CD4-positive, alpha-beta memory T cell (primary cell): ENCODE measurements at regions of chr18 and their contacts with region 1.

Region 1: DNA sequence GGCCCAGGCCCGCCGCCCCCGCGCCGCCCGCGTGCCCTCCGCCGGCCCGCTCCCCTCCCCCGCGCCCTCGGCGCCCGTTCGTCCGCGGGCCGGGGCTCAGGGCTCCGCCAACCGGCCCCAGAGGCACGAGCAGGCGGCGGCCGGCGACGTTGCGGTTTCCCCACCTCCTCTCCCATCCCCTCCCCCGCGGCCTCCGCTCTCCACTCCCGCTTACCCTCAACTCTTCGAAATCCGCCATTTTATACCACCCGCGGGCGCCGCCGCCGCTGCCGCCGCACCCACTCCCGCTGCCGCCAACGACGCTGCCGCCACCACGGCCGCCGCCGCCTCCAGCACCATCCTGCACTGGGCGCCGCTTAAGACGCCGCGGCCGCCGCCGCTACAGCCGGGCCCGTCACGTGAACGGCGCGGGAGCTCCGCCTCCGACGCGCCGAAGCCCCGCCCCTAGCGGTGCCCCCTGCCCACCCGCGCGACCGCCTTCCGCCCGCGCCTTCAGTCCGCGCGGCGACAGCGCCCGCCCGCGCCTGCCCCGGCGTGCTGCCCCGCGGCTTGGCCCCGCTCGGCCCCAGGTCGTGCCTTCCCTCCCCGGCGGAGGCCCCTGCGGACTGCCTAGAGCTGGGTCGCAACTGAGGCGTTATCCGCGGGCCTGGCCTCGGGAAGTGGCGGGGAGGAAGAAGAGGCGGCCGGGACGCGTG is at the starts of genes KATNAL2 and PIAS2:
- DNase-seq: peak; percentile 72 to 79 (median 73)
- H3K4me3 ChIP-seq: peak within 1 kb of the TSS; percentile 60 to 66
- H3K4me3 Mint-ChIP-seq: peak within 1 kb of the TSS; percentile 91 to 96 (median 92)
- H3K27ac ChIP-seq: peak within 1 kb of the TSS; percentile 40
- H3K27ac Mint-ChIP-seq: peak within 1 kb of the TSS; percentile 89 to 95 (median 91)
- H3K4me1 ChIP-seq: peaks cover 27% of the 10 kb centered on the region
- H3K4me1 Mint-ChIP-seq: peaks cover 35 to 56% (median 47%) of the 10 kb centered on the region in 4 donors
- H3K27me3 ChIP-seq: no peaks in the 10 kb centered on the region
- H3K27me3 Mint-ChIP-seq: no peaks in the 10 kb centered on the region
- total RNA-seq, gene KATNAL2: 0.94 to 2.1 TPM
- total RNA-seq, gene PIAS2: 36.2 to 38.3 TPM

Region 2: GRCh38 chr18:46829947-46830346 is 87.3 kb before region 1 on chr18:
- CTCF ChIA-PET with region 1: no interaction called
- POLR2A ChIA-PET with region 1: no interaction called
- intact Hi-C with region 1: loop called (anchors 5 kb)
- DNase-seq: no peak
- H3K4me3 ChIP-seq: no peak overlapping the region
- H3K4me3 Mint-ChIP-seq: no peak overlapping the region
- H3K27ac ChIP-seq: no peak overlapping the region
- H3K27ac Mint-ChIP-seq: no peak overlapping the region
- H3K4me1 ChIP-seq: no peaks in the 10 kb centered on the region
- H3K4me1 Mint-ChIP-seq: peaks cover 0 to under 1% (median 0%) of the 10 kb centered on the region in 4 donors
- H3K27me3 ChIP-seq: no peaks in the 10 kb centered on the region
- H3K27me3 Mint-ChIP-seq: no peaks in the 10 kb centered on the region

Region 3: GRCh38 chr18:46903406-46903805 is 13.8 kb before region 1 on chr18:
- CTCF ChIA-PET with region 1: no interaction called
- POLR2A ChIA-PET with region 1: no interaction called
- intact Hi-C with region 1: no loop called
- DNase-seq: no peak
- H3K4me3 ChIP-seq: no peak overlapping the region
- H3K4me3 Mint-ChIP-seq: no peak overlapping the region
- H3K27ac ChIP-seq: no peak overlapping the region
- H3K27ac Mint-ChIP-seq: no peak overlapping the region
- H3K4me1 ChIP-seq: no peaks in the 10 kb centered on the region
- H3K4me1 Mint-ChIP-seq: peaks cover 14 to 27% (median 19%) of the 10 kb centered on the region in 4 donors
- H3K27me3 ChIP-seq: no peaks in the 10 kb centered on the region
- H3K27me3 Mint-ChIP-seq: no peaks in the 10 kb centered on the region

Region 4: DNA sequence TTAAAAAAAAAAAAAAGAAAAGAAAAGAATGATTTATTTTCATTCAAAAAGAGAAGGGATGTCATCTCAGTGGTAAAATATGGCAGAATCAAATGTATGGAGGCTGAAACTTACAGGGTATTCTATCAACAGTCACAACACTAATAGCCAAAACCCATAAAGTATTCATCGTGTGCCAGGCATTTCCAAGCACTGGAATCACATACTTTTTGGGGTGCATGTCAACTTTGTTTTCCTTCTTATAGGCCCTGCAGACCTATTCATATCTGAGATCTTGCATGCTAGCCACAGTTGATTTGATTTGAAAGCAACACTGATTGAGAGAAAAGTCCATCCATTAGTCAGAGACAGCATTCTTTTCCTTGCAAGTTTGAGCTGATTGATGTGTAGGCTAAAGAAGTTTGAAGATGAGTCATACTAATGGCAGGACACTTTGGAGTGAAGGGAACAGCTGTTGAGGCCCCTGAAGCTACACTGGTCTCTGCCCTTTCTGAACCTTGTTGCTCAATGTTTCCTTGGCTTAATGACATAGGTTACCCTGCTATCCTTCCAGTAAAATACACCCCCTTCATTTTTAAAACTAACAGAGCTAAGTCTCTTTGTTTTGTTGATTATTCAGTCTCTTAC is 22.2 kb after region 1 on chr18:
- CTCF ChIA-PET with region 1: no interaction called
- POLR2A ChIA-PET with region 1: no interaction called
- intact Hi-C with region 1: no loop called
- DNase-seq: no peak
- H3K4me3 ChIP-seq: no peak overlapping the region
- H3K4me3 Mint-ChIP-seq: no peak overlapping the region
- H3K27ac ChIP-seq: no peak overlapping the region
- H3K27ac Mint-ChIP-seq: no peak overlapping the region
- H3K4me1 ChIP-seq: no peaks in the 10 kb centered on the region
- H3K4me1 Mint-ChIP-seq: peaks cover 0 to 5% (median under 1%) of the 10 kb centered on the region in 4 donors
- H3K27me3 ChIP-seq: no peaks in the 10 kb centered on the region
- H3K27me3 Mint-ChIP-seq: peaks cover 0 to 3% of the 10 kb centered on the region in 2 donors

Region 5: GRCh38 chr18:47050468-47050867 is 133.2 kb after region 1 on chr18:
- CTCF ChIA-PET with region 1: no interaction called
- POLR2A ChIA-PET with region 1: no interaction called
- intact Hi-C with region 1: no loop called
- DNase-seq: peak in 4 of 5 donors; percentile 12 to 27 (median 12)
- H3K4me3 ChIP-seq: no peak overlapping the region
- H3K4me3 Mint-ChIP-seq: no peak overlapping the region
- H3K27ac ChIP-seq: no peak overlapping the region
- H3K27ac Mint-ChIP-seq: no peak overlapping the region
- H3K4me1 ChIP-seq: no peaks in the 10 kb centered on the region
- H3K4me1 Mint-ChIP-seq: peaks cover 0 to 1% (median under 1%) of the 10 kb centered on the region in 4 donors
- H3K27me3 ChIP-seq: no peaks in the 10 kb centered on the region
- H3K27me3 Mint-ChIP-seq: peaks cover 0 to 3% of the 10 kb centered on the region in 2 donors

Region 6: GRCh38 chr18:47150029-47150823 is 233.0 kb after region 1 on chr18 and contains the start of gene HDHD2:
- CTCF ChIA-PET with region 1: no interaction called
- POLR2A ChIA-PET with region 1: interaction called, 10 read pairs
- intact Hi-C with region 1: no loop called
- DNase-seq: peak; percentile 62 to 72 (median 69)
- H3K4me3 ChIP-seq: peak within 1 kb of the TSS; percentile 31 to 72
- H3K4me3 Mint-ChIP-seq: peak within 1 kb of the TSS; percentile 92 to 98 (median 96)
- H3K27ac ChIP-seq: peak within 1 kb of the TSS; percentile 70
- H3K27ac Mint-ChIP-seq: peak within 1 kb of the TSS; percentile 89 to 98 (median 97)
- H3K4me1 ChIP-seq: peaks cover 39% of the 10 kb centered on the region
- H3K4me1 Mint-ChIP-seq: peaks cover 35 to 61% (median 49%) of the 10 kb centered on the region in 4 donors
- H3K27me3 ChIP-seq: no peaks in the 10 kb centered on the region
- H3K27me3 Mint-ChIP-seq: no peaks in the 10 kb centered on the region
- total RNA-seq, gene HDHD2: 34.2 to 36.5 TPM

Region 7: DNA sequence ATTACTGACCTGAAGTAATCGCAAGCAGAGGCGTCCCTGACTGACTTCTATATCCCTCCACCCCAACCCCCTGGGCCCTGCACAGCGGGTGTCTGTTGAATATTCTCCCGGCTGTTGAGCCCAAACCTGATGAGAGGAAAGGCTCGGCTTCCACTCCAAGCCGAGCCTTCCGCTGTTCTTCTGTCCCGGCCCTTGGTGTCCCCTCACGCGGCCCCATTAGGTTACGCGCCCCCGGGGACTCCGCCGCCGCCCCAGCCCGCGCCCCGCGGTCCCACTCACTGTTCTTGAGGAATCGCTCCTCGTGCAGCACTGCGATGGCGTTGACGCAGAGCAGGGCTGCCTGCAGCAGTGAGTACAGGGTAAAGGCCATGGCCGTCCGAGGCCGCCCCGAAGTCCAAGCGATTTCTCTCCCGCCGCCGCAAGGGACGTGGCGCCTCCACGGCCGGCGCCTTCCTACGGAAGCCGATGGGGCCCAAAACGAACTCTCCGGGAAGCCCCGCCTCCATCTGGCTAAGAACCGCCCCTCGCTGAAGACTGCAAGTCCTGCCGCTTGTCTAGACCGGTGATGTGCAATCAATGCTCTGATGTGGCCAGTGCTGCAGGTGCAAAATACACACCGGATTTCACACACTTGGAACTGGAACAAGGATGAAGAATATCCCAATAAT is 258.8 kb after region 1 on chr18 and contains the start of gene IER3IP1:
- CTCF ChIA-PET with region 1: no interaction called
- POLR2A ChIA-PET with region 1: no interaction called
- intact Hi-C with region 1: loop called (anchors 2 kb)
- DNase-seq: peak; percentile 84 to 89 (median 86)
- H3K4me3 ChIP-seq: peak within 1 kb of the TSS; percentile 63 to 86
- H3K4me3 Mint-ChIP-seq: peak within 1 kb of the TSS in 5 of 8 donors; percentile 10 to 66 (median 26)
- H3K27ac ChIP-seq: peak within 1 kb of the TSS; percentile 62
- H3K27ac Mint-ChIP-seq: peak within 1 kb of the TSS in 5 of 7 donors; percentile 5 to 92 (median 72)
- H3K4me1 ChIP-seq: peaks cover 32% of the 10 kb centered on the region
- H3K4me1 Mint-ChIP-seq: peaks cover 0 to 4% (median 2%) of the 10 kb centered on the region in 4 donors
- H3K27me3 ChIP-seq: no peaks in the 10 kb centered on the region
- H3K27me3 Mint-ChIP-seq: no peaks in the 10 kb centered on the region
- total RNA-seq, gene IER3IP1: 7.8 to 9.0 TPM